Activated T-helper 2 cell treated with anti-CD3 and anti-CD28 coated beads, Interferon-gamma antibody, Interleukin-2, Interleukin-4, amounts not matched to agents 10 μg/mL and 5 μg/mL and 100 μg/mL, durations not matched to agents 14 hours and 24 hours and 36 hours (primary cell): ENCODE measurements at regions of chr6 and their contacts with region 1.

Region 1: GRCh38 chr6:156191895-156192294 is 585.3 kb upstream of the ARID1B start:
- DNase-seq: no peak
- H3K4me3 Mint-ChIP-seq: no peak overlapping the region
- H3K27ac Mint-ChIP-seq: no peak overlapping the region
- H3K4me1 Mint-ChIP-seq: peaks cover 9% of the 10 kb centered on the region
- H3K27me3 Mint-ChIP-seq: no peaks in the 10 kb centered on the region

Region 2: DNA sequence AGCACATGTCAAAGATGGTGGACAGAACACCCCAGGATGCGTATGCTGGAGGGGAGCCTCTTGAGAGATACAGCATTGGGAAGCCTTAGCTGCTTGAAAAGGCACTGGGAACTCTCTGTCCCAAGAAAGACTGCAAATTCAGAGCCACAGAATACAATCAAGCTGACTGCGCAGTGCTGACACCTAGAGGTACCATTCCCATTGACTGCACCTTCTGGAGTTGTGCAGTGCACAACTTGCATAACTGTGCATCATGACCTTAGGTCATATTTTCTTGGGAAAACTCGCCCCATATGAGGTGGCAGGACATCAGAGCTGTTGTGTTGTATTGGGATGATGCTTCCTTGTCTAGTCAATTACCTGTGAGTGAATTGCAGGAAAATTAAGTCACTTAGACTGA is 89.8 kb before region 1 on chr6:
- intact Hi-C with region 1: no loop called
- DNase-seq: no peak
- H3K4me3 Mint-ChIP-seq: no peak overlapping the region
- H3K27ac Mint-ChIP-seq: no peak overlapping the region
- H3K4me1 Mint-ChIP-seq: no peaks in the 10 kb centered on the region
- H3K27me3 Mint-ChIP-seq: no peaks in the 10 kb centered on the region

Region 3: GRCh38 chr6:156126535-156126934 is 65.4 kb before region 1 on chr6:
- intact Hi-C with region 1: no loop called
- DNase-seq: no peak
- H3K4me3 Mint-ChIP-seq: no peak overlapping the region
- H3K27ac Mint-ChIP-seq: no peak overlapping the region
- H3K4me1 Mint-ChIP-seq: no peaks in the 10 kb centered on the region
- H3K27me3 Mint-ChIP-seq: no peaks in the 10 kb centered on the region

Region 4: DNA sequence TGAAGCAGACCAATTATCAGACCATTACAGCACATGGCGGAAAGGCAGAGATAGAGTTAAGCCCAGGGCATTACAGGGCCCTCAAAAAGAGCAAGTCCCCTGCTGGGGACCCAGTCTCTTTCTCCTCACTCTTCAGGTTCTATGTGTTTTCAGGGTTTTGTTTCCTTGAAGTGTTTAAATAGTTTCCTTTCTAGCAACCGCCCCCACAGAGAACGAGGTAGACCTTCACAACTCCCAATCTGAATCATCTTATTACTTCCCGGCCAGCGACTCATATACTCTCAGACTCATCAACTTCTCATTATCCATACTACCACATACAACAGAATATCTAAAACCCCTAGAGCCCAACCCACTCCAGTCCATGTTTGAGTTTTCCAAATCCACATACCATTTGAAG is 58.7 kb after region 1 on chr6:
- intact Hi-C with region 1: loop called (anchors 2 kb)
- DNase-seq: no peak
- H3K4me3 Mint-ChIP-seq: no peak overlapping the region
- H3K27ac Mint-ChIP-seq: peak overlapping the region; percentile 3
- H3K4me1 Mint-ChIP-seq: peaks cover 16% of the 10 kb centered on the region
- H3K27me3 Mint-ChIP-seq: no peaks in the 10 kb centered on the region